Tibial artery (tissue), 4 donors: ENCODE measurements at regions of chr1 and their contacts with region 1.

Region 1: DNA sequence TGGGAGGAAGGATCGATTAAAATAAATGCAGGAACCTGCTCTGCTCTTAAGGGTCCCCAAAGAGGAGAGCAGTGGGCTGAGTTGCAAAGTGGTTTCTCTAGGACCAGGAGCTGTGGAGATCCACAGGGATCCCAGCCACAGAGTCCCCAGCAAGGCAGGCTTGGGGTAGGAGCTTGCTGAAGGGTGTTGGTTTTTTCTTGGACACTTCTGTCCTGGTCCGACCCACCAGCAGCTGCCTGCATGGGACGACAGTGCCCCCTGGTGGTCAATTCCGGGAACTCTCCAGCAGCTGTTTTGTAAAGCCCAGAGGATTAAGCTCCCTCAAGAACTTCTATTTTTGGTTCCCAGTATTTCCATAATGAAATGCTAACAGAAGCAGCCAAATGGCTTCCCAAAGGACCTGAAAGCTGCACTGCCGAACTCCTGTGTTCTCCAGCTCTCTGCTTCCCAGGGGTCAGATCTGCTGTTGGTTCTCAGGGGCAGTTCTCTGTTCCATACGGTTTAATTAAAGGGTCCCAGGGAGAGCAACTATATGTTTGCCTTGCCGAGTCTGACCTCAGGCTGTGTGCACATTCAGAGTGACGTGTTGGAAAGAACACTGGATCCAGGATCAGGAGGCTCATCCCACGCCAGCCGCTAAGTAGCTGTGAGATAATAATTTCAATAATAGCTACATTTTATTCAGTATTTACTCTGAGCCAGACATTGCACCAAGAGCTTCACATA is 23.2 kb downstream of the NENF start:
- DNase-seq: peak; percentile 89 to 95
- H3K4me3 ChIP-seq: peak overlapping the region; percentile 14 to 26
- H3K27ac ChIP-seq: peak overlapping the region; percentile 69 to 77
- H3K4me1 ChIP-seq: peaks cover 0 to 35% (median 21%) of the 10 kb centered on the region in 4 donors
- H3K27me3 ChIP-seq: no peaks in the 10 kb centered on the region
- CTCF ChIP-seq: peak; percentile 97 to 99

Region 2: DNA sequence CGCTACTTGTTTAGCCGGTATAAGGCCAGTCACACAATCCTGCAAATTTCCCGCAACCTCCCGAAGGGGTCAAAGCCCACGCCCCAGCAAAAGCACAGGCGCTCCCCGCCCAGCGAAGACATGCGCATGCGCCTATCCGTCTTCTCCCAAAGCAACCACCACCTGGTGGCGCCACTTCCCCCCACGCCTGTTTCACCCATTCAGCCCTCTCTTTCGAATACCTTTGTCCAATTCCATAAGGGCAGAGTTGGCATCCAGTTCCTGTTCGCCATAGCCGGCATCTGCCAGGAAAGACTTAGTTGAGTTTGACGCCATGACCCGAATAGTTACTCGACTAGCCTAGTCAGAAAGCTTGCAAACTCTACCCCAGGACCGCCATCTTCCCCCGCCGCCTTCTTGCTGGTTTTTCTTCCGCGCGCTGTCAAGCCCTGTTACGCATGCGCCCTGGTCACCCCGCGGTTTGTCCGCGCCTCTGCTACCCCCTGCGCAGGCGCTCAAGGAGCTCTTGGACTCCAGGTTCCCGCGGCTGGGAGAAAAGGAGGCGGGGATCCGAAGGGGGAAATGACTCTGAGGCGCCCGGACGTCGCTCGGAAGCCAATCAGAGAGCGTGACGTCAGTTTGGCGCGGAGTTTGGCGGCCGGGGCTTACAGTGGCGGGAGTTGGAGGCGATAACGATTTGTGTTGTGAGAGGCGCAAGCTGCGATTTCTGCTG is 420.7 kb before region 1 on chr1 and contains the starts of genes DTL and INTS7:
- intact Hi-C with region 1: loop called (anchors 10 kb)
- DNase-seq: peak; percentile 98 to 99
- H3K4me3 ChIP-seq: peak within 1 kb of the TSS; percentile 57 to 68
- H3K27ac ChIP-seq: peak within 1 kb of the TSS; percentile 69 to 80
- H3K4me1 ChIP-seq: peaks cover 0 to 27% (median 13%) of the 10 kb centered on the region in 4 donors
- H3K27me3 ChIP-seq: no peaks in the 10 kb centered on the region
- CTCF ChIP-seq: peak; percentile 88 to 91

Region 3: DNA sequence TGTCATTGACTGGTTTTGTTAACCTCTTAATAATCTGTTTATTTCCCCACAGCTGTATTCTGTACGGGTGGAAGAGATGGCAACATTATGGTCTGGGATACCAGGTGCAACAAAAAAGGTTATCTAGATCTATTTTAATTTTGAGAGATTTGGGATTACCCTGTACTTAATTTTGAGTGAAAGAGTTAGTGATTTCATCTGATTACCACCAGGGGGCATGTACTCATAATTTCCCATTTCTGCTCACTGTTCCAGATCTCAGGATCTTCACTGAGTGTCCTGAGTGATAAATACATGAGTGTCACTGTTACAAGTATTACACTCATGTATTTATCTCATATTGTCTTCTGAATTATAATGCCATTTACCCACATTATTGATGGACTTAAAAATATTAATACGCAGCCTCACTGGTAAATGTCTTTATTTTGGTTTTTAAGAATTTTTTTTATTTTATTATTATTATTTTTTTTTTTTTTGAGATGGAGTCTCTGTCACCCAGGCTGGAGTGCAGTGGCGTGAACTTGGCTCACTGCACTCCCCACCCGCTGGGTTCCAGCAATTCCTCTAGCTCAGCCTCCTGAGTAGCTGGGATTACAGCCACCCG is 393.0 kb before region 1 on chr1:
- intact Hi-C with region 1: loop called (anchors 5 kb)
- DNase-seq: no peak
- H3K4me3 ChIP-seq: no peak overlapping the region
- H3K27ac ChIP-seq: no peak overlapping the region
- H3K4me1 ChIP-seq: no peaks in the 10 kb centered on the region
- H3K27me3 ChIP-seq: no peaks in the 10 kb centered on the region
- CTCF ChIP-seq: peak; percentile 60 to 68

Region 4: GRCh38 chr1:212070720-212071302 is 385.2 kb before region 1 on chr1:
- intact Hi-C with region 1: loop called (anchors 5 kb)
- DNase-seq: no peak
- H3K4me3 ChIP-seq: no peak overlapping the region
- H3K27ac ChIP-seq: peak overlapping the region in 1 of 2 donors; percentile 27
- H3K4me1 ChIP-seq: peaks cover 0 to 11% (median 2%) of the 10 kb centered on the region in 4 donors
- H3K27me3 ChIP-seq: no peaks in the 10 kb centered on the region
- CTCF ChIP-seq: peak; percentile 75 to 84

Region 5: GRCh38 chr1:212291505-212292134 is 164.3 kb before region 1 on chr1:
- intact Hi-C with region 1: loop called (anchors 5 kb)
- DNase-seq: no peak
- H3K4me3 ChIP-seq: no peak overlapping the region
- H3K27ac ChIP-seq: peak overlapping the region in 1 of 2 donors; percentile 29
- H3K4me1 ChIP-seq: peaks cover 0 to 71% (median 45%) of the 10 kb centered on the region in 4 donors
- H3K27me3 ChIP-seq: no peaks in the 10 kb centered on the region
- CTCF ChIP-seq: peak; percentile 27 to 43

Region 6: GRCh38 chr1:212368073-212368484 is 87.9 kb before region 1 on chr1:
- intact Hi-C with region 1: loop called (anchors 5 kb)
- DNase-seq: peak in 1 of 2 donors; percentile 44
- H3K4me3 ChIP-seq: no peak overlapping the region
- H3K27ac ChIP-seq: peak overlapping the region in 1 of 2 donors; percentile 42
- H3K4me1 ChIP-seq: peaks cover 0 to 14% (median 0%) of the 10 kb centered on the region in 4 donors
- H3K27me3 ChIP-seq: no peaks in the 10 kb centered on the region
- CTCF ChIP-seq: peak; percentile 82 to 89